Activated CD4-positive, alpha-beta T cell treated with anti-CD3 and anti-CD28 coated beads for 36 hours (primary cell): ENCODE measurements at regions of chr13 and their contacts with region 1.

Region 1: DNA sequence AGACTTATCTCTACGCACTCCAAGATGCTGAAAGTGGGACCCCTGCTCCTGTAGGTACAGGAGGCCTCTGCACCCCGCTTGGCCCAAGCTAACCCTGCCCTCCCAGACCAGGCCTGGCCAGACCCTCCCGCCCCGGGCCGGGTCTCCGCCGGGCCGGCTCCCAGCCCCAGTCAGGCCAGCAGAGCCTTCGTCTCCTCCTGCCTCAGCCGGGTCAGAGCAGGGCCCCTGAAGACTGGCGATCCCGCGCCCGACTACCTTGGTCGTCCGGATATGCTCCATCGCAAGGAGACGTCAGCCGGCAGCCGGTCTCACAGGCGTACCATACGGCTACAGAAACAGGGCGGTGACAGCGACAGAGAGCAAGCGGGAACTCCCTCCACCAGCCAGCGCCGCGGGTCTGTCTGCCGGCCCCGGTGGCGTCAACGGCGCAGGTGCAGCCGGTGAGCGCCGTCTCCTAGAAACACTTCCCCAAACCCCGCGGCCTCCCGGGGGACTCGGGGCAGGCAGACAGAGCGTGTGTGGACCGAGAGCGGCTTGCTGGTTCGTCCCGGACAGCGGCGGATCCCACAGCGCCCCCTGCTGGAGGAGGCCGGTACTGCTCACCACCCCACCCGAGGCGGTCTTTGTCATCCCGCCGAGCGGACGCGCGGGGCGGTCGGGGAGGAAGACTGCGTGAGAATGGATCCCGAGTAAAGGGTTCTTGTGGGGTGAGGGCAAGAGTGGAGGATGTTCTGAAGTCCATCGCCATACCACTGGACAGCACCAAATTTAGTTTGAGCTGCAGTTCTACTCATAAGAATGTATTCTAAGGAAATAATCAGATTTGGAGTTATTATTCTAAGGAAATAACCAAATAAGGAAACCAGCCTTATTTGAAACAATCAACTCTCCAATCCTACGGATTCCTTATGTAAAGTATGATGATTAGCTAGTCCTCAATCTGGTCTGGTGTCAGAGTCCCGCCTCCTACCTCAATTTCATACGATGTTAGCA is at the start of gene MTMR6:
- DNase-seq: peak; percentile 96
- ATAC-seq: peak; percentile 93
- H3K4me3 Mint-ChIP-seq: peak within 1 kb of the TSS; percentile 90
- H3K27ac Mint-ChIP-seq: peak within 1 kb of the TSS; percentile 96
- H3K4me1 Mint-ChIP-seq: peaks cover 36% of the 10 kb centered on the region
- H3K27me3 Mint-ChIP-seq: peaks cover 10% of the 10 kb centered on the region
- total RNA-seq, gene MTMR6: 10.7 to 11.1 TPM

Region 2: GRCh38 chr13:24270639-24271141 is 1016.6 kb before region 1 on chr13:
- CTCF ChIA-PET with region 1: no interaction called
- POLR2A ChIA-PET with region 1: no interaction called
- intact Hi-C with region 1: loop called (anchors 5 to 10 kb)
- DNase-seq: peak; percentile 80
- ATAC-seq: peak; percentile 37
- H3K4me3 Mint-ChIP-seq: peak overlapping the region; percentile 87
- H3K27ac Mint-ChIP-seq: peak overlapping the region; percentile 97
- H3K4me1 Mint-ChIP-seq: peaks cover 85% of the 10 kb centered on the region
- H3K27me3 Mint-ChIP-seq: no peaks in the 10 kb centered on the region

Region 3: DNA sequence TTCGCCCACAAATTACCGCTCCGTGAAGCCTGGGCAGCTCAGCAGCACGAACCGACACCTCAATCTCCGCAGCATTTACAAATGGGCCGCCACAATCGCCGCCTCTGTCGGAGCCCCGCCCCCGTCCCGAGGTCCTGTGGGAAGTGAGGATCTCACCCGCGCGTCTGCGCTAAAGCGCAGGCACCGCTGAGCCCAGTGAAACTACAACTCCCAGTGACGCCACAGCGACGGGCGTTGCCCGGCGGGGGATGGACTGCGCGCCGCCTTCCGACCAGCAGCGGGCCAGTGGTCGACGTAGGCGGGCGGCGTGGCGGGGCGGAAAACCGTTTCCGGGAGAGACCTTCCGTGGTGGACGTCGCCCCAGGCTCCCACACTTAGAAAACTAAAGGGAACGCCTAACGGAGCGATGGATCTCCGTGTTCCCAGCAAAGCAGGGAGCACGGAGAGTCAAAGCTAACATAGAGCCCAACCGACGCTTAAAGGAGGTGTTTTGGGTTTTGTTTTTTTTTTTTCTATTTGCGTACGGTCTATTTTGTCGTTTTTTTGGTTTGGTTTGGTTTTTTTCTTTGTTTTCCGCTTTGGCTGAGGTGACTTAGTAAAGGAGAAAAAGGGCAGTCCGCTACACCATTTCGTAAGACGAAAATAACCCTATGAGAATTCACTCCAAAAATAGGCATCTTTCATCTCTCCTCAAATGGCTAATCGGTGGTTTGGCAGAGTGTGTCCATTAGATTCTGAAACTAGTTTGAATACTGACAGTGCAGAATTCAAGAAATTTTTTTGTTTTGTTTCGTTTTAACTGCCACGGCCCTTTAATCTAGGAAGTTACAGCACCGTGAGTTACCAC is 364.3 kb before region 1 on chr13:
- CTCF ChIA-PET with region 1: no interaction called
- POLR2A ChIA-PET with region 1: no interaction called
- intact Hi-C with region 1: loop called in 1 of 2 experiments (anchors 5 kb)
- DNase-seq: peak; percentile 96
- ATAC-seq: peak; percentile 100
- H3K4me3 Mint-ChIP-seq: peak overlapping the region; percentile 97
- H3K27ac Mint-ChIP-seq: peak overlapping the region; percentile 94
- H3K4me1 Mint-ChIP-seq: peaks cover 9% of the 10 kb centered on the region
- H3K27me3 Mint-ChIP-seq: peaks cover 2% of the 10 kb centered on the region

Region 4: DNA sequence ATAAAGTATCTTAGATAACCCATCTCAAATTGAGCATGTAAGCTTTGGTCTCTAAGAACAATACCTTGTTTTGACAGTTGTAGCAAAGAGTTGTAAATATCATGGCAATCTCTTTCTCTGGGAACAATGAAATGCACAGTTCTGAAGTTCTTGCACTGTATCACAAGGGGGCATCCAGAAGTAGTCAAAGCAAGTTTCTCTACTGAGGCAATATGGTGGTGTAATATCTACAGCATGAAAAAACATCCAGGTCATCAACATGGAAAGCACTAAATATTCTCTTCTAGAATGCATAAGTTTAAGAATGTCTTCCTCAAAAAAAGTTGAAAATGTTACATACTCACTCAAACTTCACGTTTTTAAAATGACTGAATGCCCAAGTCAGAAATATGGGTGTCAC is 19.6 kb before region 1 on chr13:
- CTCF ChIA-PET with region 1: interaction called, 5 read pairs
- POLR2A ChIA-PET with region 1: no interaction called
- intact Hi-C with region 1: loop called in 1 of 2 experiments (anchors 1 kb)
- DNase-seq: no peak
- ATAC-seq: peak; percentile 84
- H3K4me3 Mint-ChIP-seq: no peak overlapping the region
- H3K27ac Mint-ChIP-seq: no peak overlapping the region
- H3K4me1 Mint-ChIP-seq: no peaks in the 10 kb centered on the region
- H3K27me3 Mint-ChIP-seq: no peaks in the 10 kb centered on the region

Region 5: DNA sequence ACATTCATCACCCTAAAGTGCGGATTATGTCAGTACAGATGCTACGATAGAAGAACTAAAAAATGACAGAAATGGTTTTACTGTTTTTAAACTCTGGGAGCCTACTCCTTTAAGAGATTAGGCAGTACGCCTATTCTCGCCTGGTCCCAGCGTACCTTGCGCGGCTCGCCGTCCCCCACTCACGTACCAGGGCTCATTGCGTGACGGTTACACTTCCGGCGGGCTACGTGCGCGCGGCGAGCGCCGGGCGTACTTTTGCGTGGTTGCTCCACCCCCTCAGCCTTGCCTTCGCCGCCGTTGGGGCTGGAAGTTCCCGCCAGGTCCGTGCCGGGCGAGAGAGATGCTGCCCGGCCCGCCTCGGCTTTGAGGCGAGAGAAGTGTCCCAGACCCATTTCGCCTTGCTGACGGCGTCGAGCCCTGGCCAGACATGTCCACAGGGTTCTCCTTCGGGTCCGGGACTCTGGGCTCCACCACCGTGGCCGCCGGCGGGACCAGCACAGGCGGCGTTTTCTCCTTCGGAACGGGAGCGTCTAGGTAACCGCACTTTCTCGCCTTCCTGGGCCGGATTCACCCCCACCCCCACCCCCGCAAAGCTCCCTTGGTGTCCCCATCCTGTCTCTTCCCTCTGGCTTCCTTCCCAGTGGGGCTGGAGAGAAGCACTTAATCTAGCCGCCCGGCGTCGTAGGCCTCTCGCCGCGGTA is 14.2 kb after region 1 on chr13 and contains the start of gene NUP58:
- CTCF ChIA-PET with region 1: interaction called, 30 read pairs
- POLR2A ChIA-PET with region 1: interaction called, 4 read pairs
- intact Hi-C with region 1: loop called (anchors 1 kb)
- DNase-seq: peak; percentile 97
- ATAC-seq: peak; percentile 98
- H3K4me3 Mint-ChIP-seq: peak within 1 kb of the TSS; percentile 94
- H3K27ac Mint-ChIP-seq: peak within 1 kb of the TSS; percentile 95
- H3K4me1 Mint-ChIP-seq: peaks cover 30% of the 10 kb centered on the region
- H3K27me3 Mint-ChIP-seq: peaks cover 4% of the 10 kb centered on the region
- total RNA-seq, gene NUP58: 134 to 137 TPM